AG04450 (cell line): ENCODE measurements at regions of chr1 and their contacts with region 1.

Region 1: DNA sequence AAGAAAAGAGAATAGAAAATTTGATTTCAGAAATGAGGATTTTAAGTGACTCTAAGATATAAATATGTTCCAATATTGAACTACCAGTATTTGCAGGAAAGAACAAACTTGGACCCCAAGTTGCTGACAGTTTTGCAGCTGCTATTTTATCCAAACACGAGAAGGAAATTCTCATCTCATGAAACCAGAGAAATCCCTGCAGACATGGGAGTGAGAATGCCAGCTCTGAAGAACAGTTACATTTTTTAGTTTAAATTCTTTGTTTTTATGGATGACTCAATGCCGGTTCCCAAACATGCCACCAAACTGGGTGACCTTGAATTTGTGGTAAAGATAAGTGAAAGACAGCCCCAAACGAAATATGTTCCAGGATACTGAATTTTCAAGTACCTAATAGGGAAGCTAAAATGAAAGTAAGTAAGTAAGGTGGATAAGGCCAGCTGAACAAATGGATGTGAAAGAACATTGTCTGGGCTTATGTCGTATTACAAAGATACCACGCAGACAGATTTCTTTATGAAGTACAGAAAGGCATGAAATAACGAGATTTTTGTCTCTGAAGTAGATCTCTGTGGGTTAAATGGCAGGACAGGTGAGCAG is 19.9 kb downstream of the TLR5 start:
- DNase-seq: no peak
- H3K4me3 ChIP-seq: no peak overlapping the region
- H3K27ac ChIP-seq: no peak overlapping the region
- H3K27me3 ChIP-seq: peaks cover 11% of the 10 kb centered on the region
- CTCF ChIP-seq: no peak

Region 2: DNA sequence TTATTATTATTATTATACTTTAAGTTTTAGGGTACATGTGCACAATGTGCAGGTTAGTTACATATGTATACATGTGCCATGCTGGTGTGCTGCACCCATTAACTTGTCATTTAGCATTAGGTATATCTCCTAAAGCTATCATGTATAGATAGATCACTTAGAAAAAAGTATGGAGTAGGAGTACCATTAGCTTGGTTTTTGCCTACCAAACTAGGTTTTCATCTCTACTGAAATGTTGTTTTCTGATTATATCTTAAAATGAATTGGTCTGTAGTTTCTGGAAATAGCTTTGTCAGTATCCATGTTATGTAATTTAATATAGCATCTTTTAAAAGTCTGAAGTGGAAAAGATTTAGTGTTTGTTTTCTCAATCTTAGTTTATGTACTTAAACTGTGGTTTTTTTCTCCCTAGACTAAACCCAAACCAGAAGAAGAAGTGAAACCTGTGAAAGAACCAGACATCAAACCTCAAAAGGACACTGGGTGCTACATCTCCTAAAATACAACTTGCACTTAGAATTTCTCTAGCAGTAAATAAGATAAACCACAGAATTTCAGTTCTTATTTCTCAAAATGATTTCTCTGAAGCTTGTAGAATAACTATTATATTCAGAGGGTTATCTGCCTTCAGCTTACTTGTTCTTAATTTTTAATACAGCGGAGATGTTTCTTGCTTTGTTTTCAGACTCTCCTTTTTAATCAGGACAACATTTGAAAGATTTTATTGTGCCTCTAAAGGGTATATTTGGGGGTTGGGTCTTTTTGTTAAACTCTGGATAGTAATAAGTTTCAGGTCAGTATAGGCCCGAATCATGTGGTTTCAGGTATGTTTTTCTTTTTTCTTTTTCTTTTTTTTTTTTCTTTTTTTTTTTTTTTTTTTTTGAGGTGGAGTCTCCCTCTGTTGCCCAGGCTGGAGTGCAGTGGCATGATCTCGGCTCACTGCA is 390.6 kb before region 1 on chr1:
- CTCF ChIA-PET with region 1: interaction called, 10 read pairs
- POLR2A ChIA-PET with region 1: no interaction called
- DNase-seq: no peak
- H3K4me3 ChIP-seq: no peak overlapping the region
- H3K27ac ChIP-seq: no peak overlapping the region
- H3K27me3 ChIP-seq: no peaks in the 10 kb centered on the region
- CTCF ChIP-seq: no peak

Region 3: GRCh38 chr1:222792744-222793143 is 330.4 kb before region 1 on chr1:
- CTCF ChIA-PET with region 1: interaction called, 23 read pairs
- POLR2A ChIA-PET with region 1: no interaction called
- DNase-seq: no peak
- H3K4me3 ChIP-seq: no peak overlapping the region
- H3K27ac ChIP-seq: no peak overlapping the region
- H3K27me3 ChIP-seq: no peaks in the 10 kb centered on the region
- CTCF ChIP-seq: peak; percentile 63

Region 4: DNA sequence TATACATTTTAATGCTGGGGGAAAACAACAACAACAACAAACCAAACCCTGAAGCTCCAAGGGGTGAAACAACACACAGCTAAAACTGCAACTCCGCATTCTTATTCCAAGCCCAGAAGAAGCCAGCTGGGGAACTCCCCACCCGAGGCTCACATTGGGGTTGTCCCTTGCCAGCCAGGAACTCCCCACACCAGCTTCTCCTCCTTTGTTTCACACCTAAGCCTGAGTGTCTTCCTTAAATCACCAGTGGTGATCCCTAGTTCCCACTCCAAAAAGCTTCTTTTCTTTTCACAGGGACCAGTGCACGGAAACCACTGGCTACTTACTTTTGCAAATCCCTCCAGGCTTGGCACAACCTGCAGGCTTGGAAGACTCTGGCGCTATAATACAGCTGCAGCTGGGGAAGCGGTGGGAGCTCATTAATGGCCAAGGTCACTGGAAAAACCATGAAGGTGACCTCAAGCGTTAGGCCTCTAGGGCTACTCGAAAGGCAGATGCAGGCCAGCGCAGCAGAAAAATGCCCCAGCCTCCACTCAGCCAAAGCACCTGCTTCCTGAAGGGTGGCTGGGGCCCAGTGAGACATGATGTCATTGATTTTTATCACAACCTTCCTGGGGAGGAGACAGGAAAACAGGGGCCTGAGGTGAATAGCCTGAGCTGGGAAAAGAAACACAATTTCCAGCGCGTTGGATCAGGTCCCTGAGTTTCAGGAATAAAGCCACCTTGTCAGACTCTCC is 20.1 kb before region 1 on chr1:
- CTCF ChIA-PET with region 1: interaction called, 11 read pairs
- POLR2A ChIA-PET with region 1: no interaction called
- DNase-seq: no peak
- H3K4me3 ChIP-seq: no peak overlapping the region
- H3K27ac ChIP-seq: no peak overlapping the region
- H3K27me3 ChIP-seq: peaks cover 9% of the 10 kb centered on the region
- CTCF ChIP-seq: no peak

Region 5: GRCh38 chr1:223142795-223143536 is 19.9 kb after region 1 on chr1 and contains the start of gene TLR5:
- CTCF ChIA-PET with region 1: interaction called, 144 read pairs
- POLR2A ChIA-PET with region 1: no interaction called
- DNase-seq: no peak
- H3K4me3 ChIP-seq: peak within 1 kb of the TSS; percentile 64
- H3K27ac ChIP-seq: no peak within 1 kb of the TSS
- H3K27me3 ChIP-seq: peaks cover 16% of the 10 kb centered on the region
- CTCF ChIP-seq: peak; percentile 71
- polyA plus RNA-seq, gene TLR5: 0.07 and 0.11 TPM in 2 replicates

Region 6: GRCh38 chr1:223355699-223356098 is 232.6 kb after region 1 on chr1:
- CTCF ChIA-PET with region 1: no interaction called
- POLR2A ChIA-PET with region 1: no interaction called
- DNase-seq: no peak
- H3K4me3 ChIP-seq: no peak overlapping the region
- H3K27ac ChIP-seq: no peak overlapping the region
- H3K27me3 ChIP-seq: peaks cover 61% of the 10 kb centered on the region
- CTCF ChIP-seq: no peak

Region 7: DNA sequence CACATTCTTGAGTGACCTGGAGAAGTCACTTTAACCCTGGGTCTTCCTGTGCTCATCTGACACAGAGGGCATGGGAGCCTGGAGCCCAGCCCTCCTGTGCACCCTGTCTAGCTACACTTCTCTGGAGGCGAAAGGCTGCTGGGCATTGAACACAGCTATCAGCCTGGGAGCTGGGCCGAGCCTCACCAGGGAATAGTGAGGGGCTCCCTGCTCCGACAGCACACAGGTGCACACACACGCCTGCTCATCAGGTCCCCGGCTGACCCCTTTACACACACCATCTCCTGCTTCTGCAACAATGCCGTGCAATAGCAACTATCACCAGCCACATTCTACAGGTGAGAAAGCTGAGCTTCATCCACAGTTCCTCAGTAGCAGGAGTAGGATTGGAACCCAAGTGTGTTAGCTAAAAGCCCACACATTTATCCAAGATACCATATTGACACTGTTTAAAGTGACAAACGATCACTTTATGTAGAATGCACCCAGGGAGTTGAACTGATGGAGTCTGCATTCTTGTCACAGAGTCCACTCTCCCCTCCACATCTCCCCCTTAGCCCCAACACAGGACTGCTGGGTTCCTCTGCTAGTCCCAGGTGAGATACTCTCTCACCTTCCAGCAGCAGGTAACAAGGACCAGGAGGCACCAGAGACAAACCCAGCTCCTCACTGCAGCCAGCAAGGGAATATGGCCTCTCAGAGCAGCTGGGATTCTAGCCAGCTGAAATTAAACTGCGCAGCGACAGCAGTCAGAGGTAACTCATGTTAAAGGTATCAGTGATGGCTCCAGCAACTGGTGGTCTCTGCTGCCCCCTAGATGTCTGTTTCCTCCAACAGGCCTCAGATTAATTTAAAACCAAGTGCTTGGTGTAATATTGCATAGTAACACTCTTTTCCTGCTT is 560.7 kb after region 1 on chr1:
- CTCF ChIA-PET with region 1: interaction called, 15 read pairs
- POLR2A ChIA-PET with region 1: no interaction called
- DNase-seq: no peak
- H3K4me3 ChIP-seq: no peak overlapping the region
- H3K27ac ChIP-seq: no peak overlapping the region
- H3K27me3 ChIP-seq: peaks cover 17% of the 10 kb centered on the region
- CTCF ChIP-seq: peak; percentile 79